ENCODE measurements at regions of chr14 and their contacts with region 1.

Region 1: DNA sequence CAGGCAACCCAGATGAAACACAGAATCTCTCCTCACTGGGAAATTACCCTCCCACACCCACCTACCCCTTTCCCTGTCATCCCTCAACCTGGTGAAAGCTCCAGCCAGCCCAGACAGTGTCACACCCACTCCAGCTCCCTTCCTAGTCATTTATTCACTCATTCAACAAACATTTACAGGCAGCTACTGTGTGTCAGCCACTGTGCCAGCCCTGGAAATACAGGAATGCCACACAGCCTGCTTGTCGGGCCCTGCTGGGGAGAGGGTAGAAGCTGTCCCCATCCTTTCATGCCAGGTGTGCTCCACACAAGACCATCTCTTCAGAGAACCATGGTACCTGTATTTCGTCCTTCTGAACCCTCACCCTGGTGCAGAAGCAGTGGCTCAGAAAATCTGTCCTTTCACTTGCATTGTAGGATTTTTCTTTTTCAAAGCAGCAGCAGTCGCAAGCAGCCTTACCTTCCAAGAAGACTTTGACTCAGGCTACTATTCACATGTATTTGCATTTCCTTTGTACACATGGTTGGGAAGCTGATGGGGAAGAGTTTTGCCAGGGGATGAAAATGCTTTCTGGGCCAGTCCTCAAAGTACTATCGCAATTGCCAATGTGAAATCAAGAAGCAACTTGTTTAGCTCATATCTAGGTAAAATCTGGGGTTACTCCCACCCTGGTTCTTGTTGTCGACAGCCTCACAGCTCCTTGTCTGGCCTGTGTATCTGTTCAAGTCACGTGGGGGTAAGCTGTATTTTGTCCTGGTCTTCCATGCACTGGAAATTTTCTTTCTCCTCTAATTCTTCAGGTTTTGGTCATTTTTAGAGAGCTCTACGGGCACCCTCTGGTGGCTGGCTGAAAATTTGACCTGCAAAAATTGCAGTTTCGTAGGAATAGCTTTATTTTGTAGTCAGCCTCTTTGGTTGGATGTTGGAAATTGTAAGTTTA is 147.4 kb upstream of the EGLN3 start:
- DNase-seq: peak; percentile 36
- ATAC-seq: peak; percentile 59
- H3K4me3 ChIP-seq: no peak overlapping the region
- H3K27ac ChIP-seq: no peak overlapping the region
- H3K4me1 ChIP-seq: no peaks in the 10 kb centered on the region
- H3K27me3 ChIP-seq: no peaks in the 10 kb centered on the region
- CTCF ChIP-seq: peak; percentile 57 to 74 (median 63); a peak in 5 of 6 replicates
- EP300 ChIP-seq: no peak
- POLR2A ChIP-seq: no peak
- RAD21 ChIP-seq: peak; percentile 92

Region 2: DNA sequence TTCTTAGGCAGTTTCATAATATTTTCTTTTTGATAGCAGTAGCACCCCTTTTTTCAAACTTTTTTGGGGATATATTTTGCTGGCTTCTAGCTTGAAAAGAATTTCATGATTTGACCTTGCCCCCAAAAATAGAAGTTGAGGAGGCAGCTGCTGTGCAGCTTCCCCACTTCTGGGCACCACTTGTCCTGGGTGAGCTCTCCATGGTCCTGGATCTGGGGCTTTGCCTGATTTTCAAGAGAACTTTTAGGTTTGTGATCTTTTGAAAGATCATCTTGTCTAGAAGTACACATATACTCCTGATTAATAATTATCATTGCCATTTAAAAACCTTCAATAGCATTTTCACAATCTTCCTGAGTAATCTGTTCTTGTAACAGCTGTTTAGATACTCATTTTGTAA is 888.0 kb before region 1 on chr14:
- CTCF ChIA-PET with region 1: no interaction called
- POLR2A ChIA-PET with region 1: no interaction called
- RAD21 ChIA-PET with region 1: no interaction called
- SMC1A ChIA-PET with region 1: no interaction called
- in situ Hi-C with region 1: no loop called
- intact Hi-C with region 1: no loop called
- DNase-seq: no peak
- ATAC-seq: no peak
- H3K4me3 ChIP-seq: no peak overlapping the region
- H3K27ac ChIP-seq: no peak overlapping the region
- H3K4me1 ChIP-seq: no peaks in the 10 kb centered on the region
- H3K27me3 ChIP-seq: no peaks in the 10 kb centered on the region
- CTCF ChIP-seq: no peak
- EP300 ChIP-seq: no peak
- POLR2A ChIP-seq: no peak
- RAD21 ChIP-seq: no peak

Region 3: GRCh38 chr14:33792720-33793368 is 305.5 kb before region 1 on chr14:
- CTCF ChIA-PET with region 1: interaction called, 20 read pairs
- POLR2A ChIA-PET with region 1: interaction called, 3 read pairs
- RAD21 ChIA-PET with region 1: interaction called, 12 read pairs
- SMC1A ChIA-PET with region 1: interaction called, 26 read pairs
- in situ Hi-C with region 1: no loop called
- intact Hi-C with region 1: no loop called
- DNase-seq: peak; percentile 15
- ATAC-seq: peak; percentile 91
- H3K4me3 ChIP-seq: no peak overlapping the region
- H3K27ac ChIP-seq: no peak overlapping the region
- H3K4me1 ChIP-seq: no peaks in the 10 kb centered on the region
- H3K27me3 ChIP-seq: no peaks in the 10 kb centered on the region
- CTCF ChIP-seq: peak; percentile 91 to 95 (median 93); a peak in 5 of 6 replicates
- EP300 ChIP-seq: no peak
- POLR2A ChIP-seq: no peak
- RAD21 ChIP-seq: peak; percentile 86

Region 4: GRCh38 chr14:33932576-33933345 is 165.6 kb before region 1 on chr14:
- CTCF ChIA-PET with region 1: interaction called, 35 read pairs
- POLR2A ChIA-PET with region 1: no interaction called
- RAD21 ChIA-PET with region 1: interaction called, 12 read pairs
- SMC1A ChIA-PET with region 1: interaction called, 32 read pairs
- in situ Hi-C with region 1: no loop called
- intact Hi-C with region 1: no loop called
- DNase-seq: no peak
- ATAC-seq: no peak
- H3K4me3 ChIP-seq: no peak overlapping the region
- H3K27ac ChIP-seq: no peak overlapping the region
- H3K4me1 ChIP-seq: no peaks in the 10 kb centered on the region
- H3K27me3 ChIP-seq: no peaks in the 10 kb centered on the region
- CTCF ChIP-seq: no peak
- EP300 ChIP-seq: no peak
- POLR2A ChIP-seq: no peak
- RAD21 ChIP-seq: no peak

Region 5: DNA sequence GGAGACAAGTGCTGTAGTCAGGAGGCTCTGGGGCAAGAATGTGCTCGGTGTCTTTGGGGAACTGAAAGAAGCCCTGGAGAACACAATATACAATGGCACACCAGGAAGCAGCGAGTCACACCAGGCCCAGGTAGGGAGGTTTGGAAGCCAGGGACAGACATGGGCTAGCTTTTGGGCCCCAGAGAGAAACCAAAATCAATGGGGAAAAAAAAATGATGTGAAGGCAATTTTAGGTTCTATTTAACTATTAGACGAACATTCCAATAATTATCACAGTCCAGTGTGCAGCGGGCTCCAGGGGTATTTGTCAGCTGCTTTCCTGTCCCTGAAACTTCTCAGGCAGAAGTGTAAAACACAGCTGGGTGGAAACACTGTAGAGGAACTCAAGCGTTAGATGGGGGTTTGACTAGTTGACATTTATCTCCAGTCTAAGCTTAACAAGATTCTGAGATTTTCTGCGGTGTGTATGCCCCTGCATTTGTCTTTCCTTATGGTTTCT is 125.7 kb before region 1 on chr14:
- CTCF ChIA-PET with region 1: interaction called, 9 read pairs
- POLR2A ChIA-PET with region 1: interaction called, 4 read pairs
- RAD21 ChIA-PET with region 1: interaction called, 9 read pairs
- SMC1A ChIA-PET with region 1: interaction called, 15 read pairs
- in situ Hi-C with region 1: no loop called
- intact Hi-C with region 1: no loop called
- DNase-seq: peak; percentile 61
- ATAC-seq: peak; percentile 98
- H3K4me3 ChIP-seq: 0 out of 2 replicates have a peak overlapping the region, but pooled peaks have one; percentile 24
- H3K27ac ChIP-seq: peak overlapping the region; percentile 68
- H3K4me1 ChIP-seq: peaks cover 15% of the 10 kb centered on the region
- H3K27me3 ChIP-seq: no peaks in the 10 kb centered on the region
- CTCF ChIP-seq: no peak
- EP300 ChIP-seq: peak; percentile 20 to 43; a peak in 2 of 4 replicates
- POLR2A ChIP-seq: no peak
- RAD21 ChIP-seq: no peak

Region 6: GRCh38 chr14:34018564-34019244 is 79.6 kb before region 1 on chr14:
- CTCF ChIA-PET with region 1: interaction called, 30 read pairs
- POLR2A ChIA-PET with region 1: interaction called, 3 read pairs
- RAD21 ChIA-PET with region 1: interaction called, 41 read pairs
- SMC1A ChIA-PET with region 1: interaction called, 90 read pairs
- in situ Hi-C with region 1: no loop called
- intact Hi-C with region 1: no loop called
- DNase-seq: peak; percentile 45
- ATAC-seq: peak; percentile 83
- H3K4me3 ChIP-seq: peak overlapping the region; percentile 72
- H3K27ac ChIP-seq: peak overlapping the region; percentile 14
- H3K4me1 ChIP-seq: peaks cover 5% of the 10 kb centered on the region
- H3K27me3 ChIP-seq: no peaks in the 10 kb centered on the region
- CTCF ChIP-seq: no peak
- EP300 ChIP-seq: peak in 1 of 2 experiments; percentile 14; a peak in 1 of 4 replicates
- POLR2A ChIP-seq: 0 out of 2 replicates have a peak, but pooled peaks have one; percentile 39
- RAD21 ChIP-seq: no peak

Region 7: DNA sequence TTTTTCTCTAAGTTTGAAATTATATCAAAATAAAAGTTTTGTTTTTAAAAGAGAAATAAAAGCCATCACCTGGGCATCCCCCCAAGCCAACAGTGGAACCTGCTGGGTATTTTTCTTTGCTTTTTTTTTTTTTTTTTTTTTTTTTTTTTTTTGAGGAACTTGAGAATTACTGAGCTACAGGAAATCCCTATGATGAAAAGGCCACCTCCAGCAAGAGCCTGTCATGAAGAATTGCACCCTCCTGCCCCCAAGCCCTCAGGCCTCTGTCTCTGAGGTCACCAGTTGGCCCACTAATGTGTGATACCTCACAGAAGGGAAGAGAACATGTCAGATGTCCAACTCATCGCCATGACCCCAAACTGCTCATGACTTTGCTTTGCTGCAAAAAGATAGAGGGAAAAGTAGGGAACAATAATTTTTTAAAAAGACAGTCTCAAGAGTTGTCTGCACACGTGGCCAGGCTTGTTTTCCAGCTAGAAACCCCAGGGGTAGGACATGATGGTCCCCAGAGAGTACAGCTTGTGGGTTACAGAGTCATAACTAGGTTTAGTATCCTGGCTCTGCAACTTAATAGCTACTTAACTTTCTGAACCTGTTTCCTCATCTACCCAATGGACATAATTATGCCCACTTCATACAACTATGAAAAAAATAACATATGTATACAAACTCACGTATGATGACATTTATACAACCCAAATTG is 23.1 kb before region 1 on chr14:
- CTCF ChIA-PET with region 1: interaction called, 33 read pairs
- POLR2A ChIA-PET with region 1: interaction called, 5 read pairs
- RAD21 ChIA-PET with region 1: interaction called, 35 read pairs
- SMC1A ChIA-PET with region 1: interaction called, 58 read pairs
- in situ Hi-C with region 1: no loop called
- intact Hi-C with region 1: no loop called
- DNase-seq: no peak
- ATAC-seq: peak; percentile 86
- H3K4me3 ChIP-seq: no peak overlapping the region
- H3K27ac ChIP-seq: no peak overlapping the region
- H3K4me1 ChIP-seq: peaks cover 17% of the 10 kb centered on the region
- H3K27me3 ChIP-seq: no peaks in the 10 kb centered on the region
- CTCF ChIP-seq: no peak
- EP300 ChIP-seq: no peak
- POLR2A ChIP-seq: no peak
- RAD21 ChIP-seq: no peak

Region 8: DNA sequence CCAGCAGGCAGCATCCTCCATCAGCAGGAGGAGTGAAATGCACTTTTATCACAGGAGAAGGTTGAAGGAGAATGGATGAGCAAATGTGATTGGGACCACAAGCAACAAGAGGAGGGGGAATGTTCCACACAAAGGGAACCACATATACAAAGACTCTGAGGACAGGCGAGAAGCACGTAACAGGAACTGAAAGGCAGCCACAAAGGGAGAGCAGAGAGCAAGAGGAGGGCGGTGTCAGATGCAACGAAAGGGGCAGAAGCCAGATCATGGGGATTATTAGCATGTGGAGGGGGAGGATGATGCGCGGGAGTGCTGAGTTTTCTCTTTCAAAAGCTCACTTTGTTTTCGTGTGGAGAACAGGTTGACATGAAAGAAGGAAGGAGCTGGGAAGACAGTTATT is 122.6 kb after region 1 on chr14:
- CTCF ChIA-PET with region 1: interaction called, 101 read pairs
- POLR2A ChIA-PET with region 1: interaction called, 3 read pairs
- RAD21 ChIA-PET with region 1: interaction called, 37 read pairs
- SMC1A ChIA-PET with region 1: interaction called, 139 read pairs
- in situ Hi-C with region 1: no loop called
- intact Hi-C with region 1: no loop called
- DNase-seq: peak; percentile 40
- ATAC-seq: peak; percentile 99
- H3K4me3 ChIP-seq: no peak overlapping the region
- H3K27ac ChIP-seq: no peak overlapping the region
- H3K4me1 ChIP-seq: no peaks in the 10 kb centered on the region
- H3K27me3 ChIP-seq: peaks cover 0 to 2% of the 10 kb centered on the region in 2 experiments; a peak in 1 of 4 replicates
- CTCF ChIP-seq: no peak
- EP300 ChIP-seq: peak in 1 of 2 experiments; percentile 83; a peak in 2 of 4 replicates
- POLR2A ChIP-seq: no peak
- RAD21 ChIP-seq: no peak

Region 9: DNA sequence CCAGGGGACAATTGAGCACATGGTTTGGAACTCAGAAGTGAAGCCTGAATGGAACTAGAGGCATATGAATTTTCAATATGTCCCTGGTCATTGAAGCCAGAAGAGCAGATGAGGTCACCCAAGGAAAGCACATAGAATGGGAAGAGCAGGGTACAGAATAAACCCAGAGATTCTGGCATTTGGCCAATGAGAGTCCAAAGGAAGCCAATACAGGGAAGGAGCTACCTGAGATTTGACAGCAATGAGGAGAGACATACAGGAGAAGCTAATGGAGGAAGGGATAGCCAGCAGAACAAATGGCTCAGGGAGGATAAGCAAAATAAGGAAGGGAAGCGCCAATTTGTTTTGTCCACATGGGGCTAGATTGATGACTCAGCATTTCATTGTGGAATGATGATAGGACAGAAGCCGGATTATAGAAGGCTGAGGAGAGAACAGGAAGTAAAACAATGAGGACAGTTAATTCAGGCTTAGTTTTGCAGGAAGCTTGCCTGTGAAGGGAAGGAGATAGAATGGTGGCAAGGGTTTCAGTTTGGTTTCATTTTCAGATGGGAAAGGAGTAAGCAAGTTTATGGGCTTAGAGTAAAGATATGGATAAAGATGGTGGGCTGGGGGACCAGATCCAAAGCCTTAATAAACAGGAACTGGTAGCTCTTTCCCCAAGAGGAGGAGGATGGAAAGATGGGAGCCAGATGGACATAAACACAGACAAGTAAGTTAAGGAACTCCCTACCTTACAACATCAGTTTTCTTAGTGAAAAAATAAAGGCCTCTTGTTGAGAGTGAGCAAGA is 366.9 kb after region 1 on chr14:
- CTCF ChIA-PET with region 1: no interaction called
- POLR2A ChIA-PET with region 1: no interaction called
- RAD21 ChIA-PET with region 1: no interaction called
- SMC1A ChIA-PET with region 1: no interaction called
- in situ Hi-C with region 1: no loop called
- intact Hi-C with region 1: no loop called
- DNase-seq: no peak
- ATAC-seq: no peak
- H3K4me3 ChIP-seq: no peak overlapping the region
- H3K27ac ChIP-seq: no peak overlapping the region
- H3K4me1 ChIP-seq: no peaks in the 10 kb centered on the region
- H3K27me3 ChIP-seq: no peaks in the 10 kb centered on the region
- CTCF ChIP-seq: no peak
- EP300 ChIP-seq: no peak
- POLR2A ChIP-seq: no peak
- RAD21 ChIP-seq: no peak